Activated CD8-positive, alpha-beta T cell treated with anti-CD3 and anti-CD28 coated beads, Interleukin-2, amount 10 ng/mL, durations not matched to agents 7 days and 5 days (primary cell): ENCODE measurements at regions of chr19 and their contacts with region 1.

Region 1: DNA sequence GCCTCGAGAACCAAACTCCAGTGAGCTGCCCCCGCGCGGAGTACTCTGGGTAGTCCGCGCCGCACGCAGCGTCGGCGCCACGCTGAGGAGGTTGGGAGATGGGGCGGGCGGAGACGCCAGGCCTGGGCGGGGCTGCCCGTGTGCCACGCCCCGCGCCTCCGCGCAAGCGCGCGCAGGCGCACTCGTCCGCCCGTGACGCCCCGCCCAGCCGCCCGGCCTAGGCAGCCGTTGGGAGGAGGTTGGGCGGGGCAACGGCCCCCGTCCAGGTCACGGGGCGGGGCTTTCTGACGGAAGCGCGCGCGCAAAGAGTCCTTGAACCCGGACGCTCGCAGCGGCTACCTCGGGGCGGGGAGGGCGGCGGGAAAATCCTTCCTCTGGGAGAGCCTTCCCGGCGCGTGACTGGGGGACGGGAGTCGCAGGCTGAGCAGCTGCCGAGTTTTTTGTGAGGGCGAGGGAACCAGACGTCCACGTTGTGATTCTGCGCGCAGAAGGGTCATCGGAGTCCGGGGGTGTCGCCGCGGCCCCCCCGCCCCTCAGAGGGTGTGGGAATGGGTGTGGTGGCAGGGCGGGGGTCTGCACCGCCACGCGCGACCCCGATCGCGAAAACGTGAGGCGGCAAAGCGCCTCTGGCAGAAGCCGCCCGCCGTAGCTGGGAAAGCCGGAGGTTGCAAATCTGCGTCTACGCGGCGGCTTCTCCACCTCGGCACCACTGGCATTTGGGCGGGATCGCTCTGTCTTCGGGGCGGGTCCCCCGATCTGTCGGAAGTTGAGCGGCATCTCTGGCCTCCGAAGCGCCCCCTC is at the start of gene MED26:
- DNase-seq: peak; percentile 96
- ATAC-seq: peak; percentile 94
- H3K4me3 Mint-ChIP-seq: peak within 1 kb of the TSS; percentile 99
- H3K27ac Mint-ChIP-seq: peak within 1 kb of the TSS; percentile 100
- H3K4me1 Mint-ChIP-seq: peaks cover 43% of the 10 kb centered on the region
- H3K27me3 Mint-ChIP-seq: no peaks in the 10 kb centered on the region
- total RNA-seq, gene MED26: 17.2 to 17.4 TPM

Region 2: GRCh38 chr19:16542045-16542909 is 86.1 kb before region 1 on chr19 and contains the start of gene CHERP:
- CTCF ChIA-PET with region 1: interaction called, 3 read pairs
- POLR2A ChIA-PET with region 1: interaction called, 19 read pairs
- DNase-seq: peak; percentile 96
- ATAC-seq: peak; percentile 91
- H3K4me3 Mint-ChIP-seq: peak within 1 kb of the TSS; percentile 85
- H3K27ac Mint-ChIP-seq: peak within 1 kb of the TSS; percentile 90
- H3K4me1 Mint-ChIP-seq: peaks cover 56% of the 10 kb centered on the region
- H3K27me3 Mint-ChIP-seq: no peaks in the 10 kb centered on the region
- total RNA-seq, gene CHERP: 60.0 to 60.8 TPM

Region 3: DNA sequence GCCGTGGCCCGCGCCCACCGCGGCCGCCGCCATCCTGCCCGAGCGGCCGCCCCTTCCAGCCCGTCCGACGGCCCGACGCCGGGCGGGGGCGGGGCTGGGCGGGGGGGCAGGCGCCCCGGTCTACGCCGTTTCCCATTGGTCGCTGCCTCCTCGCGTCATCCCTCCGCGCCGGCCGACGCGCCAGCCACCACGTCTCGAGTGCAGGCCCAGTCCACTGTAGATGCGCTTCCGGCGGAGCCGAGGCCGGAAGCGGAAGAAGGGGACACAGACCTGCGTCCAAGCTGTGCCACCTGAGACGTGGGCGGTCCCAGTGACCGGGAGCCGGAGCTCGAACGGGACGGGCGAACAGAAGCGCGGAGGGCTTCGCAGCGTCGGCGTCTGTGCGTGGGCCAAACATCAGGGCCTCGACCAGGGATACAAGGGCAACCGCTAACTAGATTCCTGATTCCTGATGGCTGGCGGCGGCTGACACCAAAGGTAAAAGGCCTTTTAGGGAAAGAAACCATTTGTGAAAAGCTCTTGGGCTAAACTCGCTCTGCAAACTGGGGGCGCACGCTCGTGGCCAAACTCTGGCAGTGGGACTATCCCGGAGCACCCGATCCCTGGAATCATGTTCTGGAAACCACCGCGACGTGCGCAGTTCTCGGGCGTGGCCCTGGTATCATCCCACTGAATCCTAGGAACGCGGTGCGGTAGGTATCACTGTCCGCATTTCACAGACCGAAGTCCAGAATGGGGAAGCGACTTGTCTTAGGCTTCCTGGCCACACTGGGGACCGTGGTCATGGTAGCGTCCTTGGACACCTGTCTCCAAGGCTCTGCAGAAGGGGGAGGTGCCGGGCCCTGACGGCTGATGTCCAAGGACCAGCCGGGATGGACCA is 55.8 kb before region 1 on chr19 and contains the start of gene SLC35E1:
- CTCF ChIA-PET with region 1: no interaction called
- POLR2A ChIA-PET with region 1: interaction called, 23 read pairs
- DNase-seq: peak; percentile 93
- ATAC-seq: peak; percentile 90
- H3K4me3 Mint-ChIP-seq: peak within 1 kb of the TSS; percentile 100
- H3K27ac Mint-ChIP-seq: peak within 1 kb of the TSS; percentile 100
- H3K4me1 Mint-ChIP-seq: peaks cover 66% of the 10 kb centered on the region
- H3K27me3 Mint-ChIP-seq: no peaks in the 10 kb centered on the region
- total RNA-seq, gene SLC35E1: 55.6 to 61.9 TPM

Region 4: GRCh38 chr19:16594131-16594586 is 34.2 kb before region 1 on chr19:
- CTCF ChIA-PET with region 1: interaction called, 18 read pairs
- POLR2A ChIA-PET with region 1: interaction called, 18 read pairs
- DNase-seq: peak; percentile 73
- ATAC-seq: peak; percentile 69
- H3K4me3 Mint-ChIP-seq: peak overlapping the region; percentile 72
- H3K27ac Mint-ChIP-seq: peak overlapping the region; percentile 92
- H3K4me1 Mint-ChIP-seq: peaks cover 87% of the 10 kb centered on the region
- H3K27me3 Mint-ChIP-seq: no peaks in the 10 kb centered on the region

Region 5: DNA sequence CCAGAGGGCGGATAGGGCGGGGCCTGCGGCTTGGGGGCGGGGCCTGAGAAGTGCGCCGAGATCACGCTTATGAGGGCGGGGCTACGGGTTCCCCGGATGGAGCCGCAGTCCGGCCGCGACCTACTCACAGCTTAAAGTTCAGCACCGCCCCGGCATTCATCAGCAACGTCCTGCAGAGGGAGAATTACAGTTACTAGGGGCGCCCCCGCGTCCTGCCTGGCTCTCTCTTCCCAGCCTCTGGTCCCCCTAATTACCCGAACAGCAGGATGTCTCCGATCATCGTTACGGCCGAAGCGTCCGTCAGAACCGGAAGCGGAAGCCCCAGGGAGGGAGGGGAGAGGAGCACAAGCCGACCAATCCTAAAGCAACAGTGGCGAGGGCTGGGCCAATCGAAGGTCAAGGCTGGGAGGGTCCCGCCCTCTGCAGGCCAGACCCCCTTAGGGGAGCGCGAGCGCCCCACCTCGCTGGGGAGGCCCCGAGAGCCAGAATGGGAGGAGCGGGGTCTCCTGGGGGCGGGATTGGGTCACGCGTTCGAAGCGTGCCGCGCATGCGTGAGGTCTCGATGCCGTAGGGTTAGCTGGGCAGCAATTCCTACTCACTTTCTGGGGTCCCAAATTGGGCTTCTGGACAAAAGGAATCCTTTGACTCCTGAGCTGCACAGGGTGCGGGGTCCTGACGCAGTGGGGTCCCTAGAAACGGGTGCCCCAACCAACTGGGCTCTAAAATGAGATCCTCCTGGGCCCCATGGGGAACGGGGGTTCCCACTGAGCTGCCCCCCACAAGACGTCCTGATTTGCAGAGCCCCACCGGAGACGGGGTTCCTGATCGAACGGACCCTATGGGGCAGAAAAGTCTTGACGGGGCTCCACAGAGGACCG is 31.7 kb after region 1 on chr19 and contains the start of gene SMIM7:
- CTCF ChIA-PET with region 1: no interaction called
- POLR2A ChIA-PET with region 1: interaction called, 27 read pairs
- DNase-seq: peak; percentile 99
- ATAC-seq: peak; percentile 99
- H3K4me3 Mint-ChIP-seq: peak within 1 kb of the TSS; percentile 92
- H3K27ac Mint-ChIP-seq: peak within 1 kb of the TSS; percentile 97
- H3K4me1 Mint-ChIP-seq: peaks cover 50% of the 10 kb centered on the region
- H3K27me3 Mint-ChIP-seq: peaks cover 18% of the 10 kb centered on the region
- total RNA-seq, gene SMIM7: 51.5 to 53.5 TPM

Region 6: DNA sequence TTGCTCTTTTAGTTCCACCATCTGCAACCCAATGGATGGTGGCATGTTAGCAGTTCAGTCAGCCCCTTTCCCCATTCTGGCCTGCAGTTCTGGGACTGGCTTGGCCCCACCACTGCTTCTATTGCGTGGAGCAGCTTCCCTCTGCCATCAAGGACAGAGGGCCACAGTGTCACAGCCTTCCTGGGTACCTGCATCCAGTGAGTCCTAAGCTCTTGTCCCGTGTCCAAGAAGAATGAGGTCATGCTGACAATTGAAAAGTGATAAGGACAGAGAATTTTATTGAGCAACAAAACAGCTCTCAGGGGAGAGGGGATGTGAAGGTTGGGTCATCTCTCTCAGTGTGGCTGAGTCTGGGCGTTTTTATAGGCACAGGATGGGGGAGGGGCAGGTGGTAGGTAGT is 167.3 kb after region 1 on chr19:
- CTCF ChIA-PET with region 1: no interaction called
- POLR2A ChIA-PET with region 1: no interaction called
- DNase-seq: no peak
- ATAC-seq: no peak
- H3K4me3 Mint-ChIP-seq: no peak overlapping the region
- H3K27ac Mint-ChIP-seq: no peak overlapping the region
- H3K4me1 Mint-ChIP-seq: no peaks in the 10 kb centered on the region
- H3K27me3 Mint-ChIP-seq: no peaks in the 10 kb centered on the region